HepG2 (cell line): ENCODE measurements at regions of chr14 and their contacts with region 1.

Region 1: GRCh38 chr14:35404449-35405303 is at the start of gene NFKBIA:
- DNase-seq: peak; percentile 93
- ATAC-seq: peak; percentile 78
- H3K4me3 ChIP-seq: peak within 1 kb of the TSS; percentile 88 to 99 (median 99)
- H3K27ac ChIP-seq: peak within 1 kb of the TSS; percentile 97
- H3K4me1 ChIP-seq: peaks cover 66% of the 10 kb centered on the region
- H3K27me3 ChIP-seq: no peaks in the 10 kb centered on the region; a peak in 2 of 5 replicates
- CTCF ChIP-seq: peak; percentile 75
- EP300 ChIP-seq: peak in 1 of 2 experiments; percentile 54; a peak in 3 of 4 replicates
- POLR2A ChIP-seq: peak in 1 of 2 experiments; percentile 97; a peak in 2 of 4 replicates
- RAD21 ChIP-seq: peak; percentile 96
- total RNA-seq, gene NFKBIA: 232 and 319 TPM in 2 replicates

Region 2: DNA sequence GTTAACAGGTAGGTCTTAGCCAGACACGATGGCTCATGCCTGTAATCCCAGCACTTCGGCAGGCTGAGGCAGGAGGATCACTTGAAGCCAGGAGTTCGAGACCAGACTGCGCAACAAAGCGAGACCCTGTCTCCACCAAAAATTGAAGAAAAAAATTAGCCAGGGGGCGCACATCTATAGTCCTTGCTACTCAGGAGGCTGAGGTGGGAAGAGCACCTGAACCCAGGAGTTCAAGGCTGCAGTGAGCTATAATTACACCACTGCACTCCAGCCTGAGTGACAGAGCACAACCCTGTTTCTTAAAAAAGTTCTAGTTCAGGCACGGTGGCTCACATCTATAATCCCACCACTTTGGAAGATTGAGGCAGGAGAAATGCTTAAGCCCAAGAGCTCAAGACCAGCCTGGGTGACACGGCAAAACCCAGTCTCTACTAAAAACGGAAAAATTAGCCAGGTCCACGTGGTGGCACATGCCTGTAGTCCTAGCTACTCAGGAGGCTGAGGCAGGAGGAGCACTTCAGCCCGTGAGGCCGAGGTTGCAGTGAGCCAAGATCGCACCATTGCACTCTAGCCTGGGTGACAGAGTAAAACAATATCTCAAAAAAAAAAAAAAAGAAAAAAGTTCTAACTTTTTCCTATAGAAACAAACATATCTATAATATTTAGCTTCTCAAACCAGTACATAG is 538.6 kb before region 1 on chr14:
- CTCF ChIA-PET with region 1: no interaction called
- POLR2A ChIA-PET with region 1: no interaction called
- in situ Hi-C with region 1: no loop called
- intact Hi-C with region 1: no loop called
- DNase-seq: peak; percentile 35
- ATAC-seq: peak; percentile 45
- H3K4me3 ChIP-seq: no peak overlapping the region
- H3K27ac ChIP-seq: no peak overlapping the region
- H3K4me1 ChIP-seq: peaks cover 26% of the 10 kb centered on the region
- H3K27me3 ChIP-seq: no peaks in the 10 kb centered on the region
- CTCF ChIP-seq: peak; percentile 40
- EP300 ChIP-seq: no peak
- POLR2A ChIP-seq: no peak
- RAD21 ChIP-seq: no peak

Region 3: DNA sequence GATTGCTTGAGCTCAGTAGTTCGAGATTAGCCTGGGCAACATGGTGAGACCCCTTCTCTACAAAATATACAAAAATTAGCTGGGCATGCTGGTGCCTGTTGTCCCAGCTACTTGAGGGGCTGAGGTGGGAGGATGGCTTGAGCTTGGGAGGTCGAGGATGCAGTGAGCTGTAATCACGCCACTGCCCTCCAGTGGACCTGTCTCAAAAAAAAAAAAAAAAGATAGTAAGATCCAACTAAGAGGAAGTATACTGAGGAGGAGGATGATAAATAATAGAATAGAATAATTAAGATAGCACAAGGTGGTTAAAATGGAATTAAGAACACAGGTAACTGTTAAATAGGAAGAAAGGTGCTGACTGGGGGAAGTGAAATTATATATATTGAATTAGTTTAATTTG is 492.5 kb before region 1 on chr14:
- CTCF ChIA-PET with region 1: no interaction called
- POLR2A ChIA-PET with region 1: no interaction called
- in situ Hi-C with region 1: no loop called
- intact Hi-C with region 1: no loop called
- DNase-seq: peak; percentile 34
- ATAC-seq: peak; percentile 71
- H3K4me3 ChIP-seq: no peak overlapping the region
- H3K27ac ChIP-seq: no peak overlapping the region
- H3K4me1 ChIP-seq: no peaks in the 10 kb centered on the region
- H3K27me3 ChIP-seq: no peaks in the 10 kb centered on the region
- CTCF ChIP-seq: peak; percentile 48
- EP300 ChIP-seq: no peak
- POLR2A ChIP-seq: no peak
- RAD21 ChIP-seq: 0 out of 2 replicates have a peak, but pooled peaks have one; percentile 7

Region 4: DNA sequence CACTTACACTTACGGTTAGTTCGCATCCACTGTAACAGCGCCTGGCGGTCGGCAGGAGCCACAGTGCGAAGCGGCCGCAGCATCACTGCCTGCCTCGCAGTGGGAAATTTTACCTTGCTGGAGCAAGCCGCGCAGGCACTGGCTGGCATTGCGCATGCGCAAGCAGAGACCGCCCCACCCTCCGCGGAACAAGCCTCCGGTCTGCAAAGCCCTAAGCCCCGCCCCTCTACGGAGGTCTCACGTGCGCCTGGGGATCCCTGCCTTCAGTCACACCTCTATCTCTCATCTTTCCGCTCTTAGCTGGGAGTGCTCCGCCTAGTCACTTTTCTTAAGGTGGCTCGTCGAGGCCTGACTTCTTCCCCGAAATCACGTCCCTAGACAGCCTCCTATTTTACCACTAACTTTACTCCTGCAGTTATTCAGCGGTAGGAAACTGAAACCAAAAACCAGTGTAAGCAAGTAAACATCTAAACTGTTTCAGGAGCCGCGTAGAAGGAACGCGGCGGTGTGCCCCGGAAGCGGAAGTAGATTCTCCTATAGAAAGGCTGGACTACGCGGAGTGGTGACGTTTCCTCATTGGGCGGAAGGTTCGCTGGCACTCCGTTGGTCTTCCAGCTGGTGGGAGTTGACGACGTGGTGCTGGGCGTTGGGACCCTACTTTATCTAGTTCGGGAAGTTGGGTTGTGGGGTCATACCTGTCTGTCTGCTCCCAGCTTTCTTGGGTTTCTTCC is 422.1 kb before region 1 on chr14 and contains the start of gene SRP54:
- CTCF ChIA-PET with region 1: no interaction called
- POLR2A ChIA-PET with region 1: interaction called, 30 read pairs
- in situ Hi-C with region 1: no loop called
- intact Hi-C with region 1: no loop called
- DNase-seq: peak; percentile 100
- ATAC-seq: peak; percentile 89
- H3K4me3 ChIP-seq: peak within 1 kb of the TSS; percentile 78 to 84 (median 80)
- H3K27ac ChIP-seq: peak within 1 kb of the TSS; percentile 93
- H3K4me1 ChIP-seq: peaks cover 59% of the 10 kb centered on the region
- H3K27me3 ChIP-seq: peaks cover 0 to 3% of the 10 kb centered on the region in 2 experiments; a peak in 1 of 5 replicates
- CTCF ChIP-seq: peak; percentile 67
- EP300 ChIP-seq: no peak; a peak in 2 of 4 replicates
- POLR2A ChIP-seq: peak; percentile 99
- RAD21 ChIP-seq: peak; percentile 59
- total RNA-seq, gene SRP54: 207 and 297 TPM in 2 replicates

Region 5: GRCh38 chr14:35146711-35147149 is 257.9 kb before region 1 on chr14:
- CTCF ChIA-PET with region 1: interaction called, 51 read pairs
- POLR2A ChIA-PET with region 1: interaction called, 98 read pairs
- in situ Hi-C with region 1: loop called (anchors 5 kb)
- intact Hi-C with region 1: no loop called
- DNase-seq: peak; percentile 72
- ATAC-seq: peak; percentile 84
- H3K4me3 ChIP-seq: no peak overlapping the region
- H3K27ac ChIP-seq: peak overlapping the region; percentile 3
- H3K4me1 ChIP-seq: peaks cover 33% of the 10 kb centered on the region
- H3K27me3 ChIP-seq: no peaks in the 10 kb centered on the region
- CTCF ChIP-seq: no peak
- EP300 ChIP-seq: no peak
- POLR2A ChIP-seq: no peak
- RAD21 ChIP-seq: no peak

Region 6: GRCh38 chr14:35285168-35286002 is 119.3 kb before region 1 on chr14:
- CTCF ChIA-PET with region 1: no interaction called
- POLR2A ChIA-PET with region 1: interaction called, 287 read pairs
- in situ Hi-C with region 1: loop called (anchors 5 kb)
- intact Hi-C with region 1: no loop called
- DNase-seq: no peak
- ATAC-seq: no peak
- H3K4me3 ChIP-seq: no peak overlapping the region
- H3K27ac ChIP-seq: no peak overlapping the region
- H3K4me1 ChIP-seq: peaks cover 14% of the 10 kb centered on the region
- H3K27me3 ChIP-seq: no peaks in the 10 kb centered on the region
- CTCF ChIP-seq: no peak
- EP300 ChIP-seq: no peak
- POLR2A ChIP-seq: no peak
- RAD21 ChIP-seq: no peak

Region 7: GRCh38 chr14:35331605-35332516 is 72.8 kb before region 1 on chr14:
- CTCF ChIA-PET with region 1: interaction called, 10 read pairs
- POLR2A ChIA-PET with region 1: interaction called, 473 read pairs
- in situ Hi-C with region 1: loop called (anchors 5 kb)
- intact Hi-C with region 1: loop called (anchors 1 kb)
- DNase-seq: peak; percentile 75
- ATAC-seq: peak; percentile 31
- H3K4me3 ChIP-seq: peak overlapping the region; percentile 32 to 62 (median 41)
- H3K27ac ChIP-seq: no peak overlapping the region
- H3K4me1 ChIP-seq: peaks cover 67% of the 10 kb centered on the region
- H3K27me3 ChIP-seq: no peaks in the 10 kb centered on the region
- CTCF ChIP-seq: peak; percentile 11; the same call in 1 of the 2 replicates
- EP300 ChIP-seq: no peak
- POLR2A ChIP-seq: no peak
- RAD21 ChIP-seq: peak; percentile 39; the same call in 1 of the 2 replicates

Region 8: DNA sequence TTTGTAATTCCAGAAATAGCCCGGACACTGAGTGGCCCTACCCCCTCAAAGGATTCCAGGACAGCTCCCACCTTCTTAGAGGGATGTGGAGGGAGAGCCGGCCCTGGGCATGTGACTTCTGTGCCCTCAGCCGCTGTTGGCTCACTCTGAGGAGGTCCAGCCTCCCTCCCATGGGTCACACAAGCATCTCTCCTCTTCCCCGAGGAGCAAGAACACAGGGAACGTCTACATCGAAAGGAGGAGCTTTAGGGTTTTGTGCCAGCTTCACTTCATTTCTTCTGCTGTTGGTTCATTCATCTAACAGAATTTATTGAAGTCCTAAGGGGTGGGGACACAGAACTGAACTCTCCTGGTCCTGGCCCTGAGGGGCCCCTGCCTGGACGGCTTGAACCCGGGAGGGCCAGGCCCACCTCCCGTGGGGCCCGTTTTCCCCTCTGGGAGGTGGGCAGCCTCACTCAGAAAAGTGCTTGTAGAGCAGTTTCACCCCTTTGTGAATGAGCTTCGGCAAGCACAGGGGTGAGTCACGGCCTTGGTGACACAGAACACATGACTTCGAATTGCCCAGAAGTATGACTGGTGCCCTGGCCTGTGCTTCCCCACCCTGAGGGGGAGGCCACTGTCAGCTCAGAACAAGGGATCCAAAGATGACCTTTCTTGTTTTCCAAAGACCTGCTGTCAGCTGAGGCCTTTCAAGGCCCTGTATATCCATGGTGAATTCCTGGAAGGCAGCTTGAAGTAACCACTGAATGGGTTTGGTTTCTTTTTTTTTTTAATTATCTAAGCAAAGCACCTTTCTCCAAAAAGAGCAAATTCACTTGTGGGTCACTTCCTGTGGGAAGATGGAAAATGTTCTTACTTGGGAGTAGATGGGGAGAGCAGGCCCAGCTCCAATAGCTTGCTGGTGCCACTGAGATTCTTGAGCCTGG is 39.3 kb before region 1 on chr14:
- CTCF ChIA-PET with region 1: no interaction called
- POLR2A ChIA-PET with region 1: interaction called, 82 read pairs
- in situ Hi-C with region 1: no loop called
- intact Hi-C with region 1: loop called (anchors 5 kb)
- DNase-seq: peak; percentile 98
- ATAC-seq: peak; percentile 87
- H3K4me3 ChIP-seq: peak overlapping the region in 2 of 3 experiments; percentile 1 to 38; a peak in 2 of 6 replicates
- H3K27ac ChIP-seq: no peak overlapping the region
- H3K4me1 ChIP-seq: peaks cover 61% of the 10 kb centered on the region
- H3K27me3 ChIP-seq: 0 out of 5 replicates have a peak, but pooled peaks cover 0 to 6% of the 10 kb centered on the region in 2 experiments
- CTCF ChIP-seq: no peak; the same call in 1 of the 2 replicates
- EP300 ChIP-seq: peak; percentile 73 to 75; a peak in 3 of 4 replicates
- POLR2A ChIP-seq: 0 out of 4 replicates have a peak, but pooled peaks of 1 of the 2 experiments have one; percentile 28
- RAD21 ChIP-seq: peak; percentile 35; the same call in 1 of the 2 replicates

Region 9: DNA sequence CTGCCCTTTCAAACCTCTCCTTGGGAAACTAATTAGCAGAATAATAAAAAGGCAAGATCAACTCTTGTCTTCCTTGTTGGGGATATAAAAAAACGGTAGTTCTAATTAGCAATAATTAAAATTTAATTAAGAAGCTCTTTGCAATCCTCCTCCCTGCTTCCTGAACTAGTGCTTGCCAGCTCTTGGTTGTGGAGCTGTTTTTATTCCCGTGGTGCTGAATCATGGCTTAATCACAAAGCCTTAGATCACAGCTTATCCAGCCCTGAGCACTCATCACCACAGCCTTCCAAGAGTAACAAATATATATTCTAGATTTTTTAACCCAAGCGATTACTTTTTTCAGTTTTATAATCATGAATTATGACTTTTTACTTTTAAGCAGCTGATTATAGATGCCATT is 66.1 kb after region 1 on chr14:
- CTCF ChIA-PET with region 1: no interaction called
- POLR2A ChIA-PET with region 1: no interaction called
- in situ Hi-C with region 1: no loop called
- intact Hi-C with region 1: no loop called
- DNase-seq: no peak
- ATAC-seq: no peak
- H3K4me3 ChIP-seq: no peak overlapping the region
- H3K27ac ChIP-seq: no peak overlapping the region
- H3K4me1 ChIP-seq: no peaks in the 10 kb centered on the region
- H3K27me3 ChIP-seq: no peaks in the 10 kb centered on the region
- CTCF ChIP-seq: no peak
- EP300 ChIP-seq: no peak
- POLR2A ChIP-seq: no peak
- RAD21 ChIP-seq: no peak

Region 10: GRCh38 chr14:35826218-35826951 is 421.7 kb after region 1 on chr14 and contains the start of gene BRMS1L:
- CTCF ChIA-PET with region 1: no interaction called
- POLR2A ChIA-PET with region 1: interaction called, 13 read pairs
- in situ Hi-C with region 1: no loop called
- intact Hi-C with region 1: no loop called
- DNase-seq: peak; percentile 100
- ATAC-seq: peak; percentile 96
- H3K4me3 ChIP-seq: peak within 1 kb of the TSS; percentile 78 to 99 (median 95)
- H3K27ac ChIP-seq: peak within 1 kb of the TSS; percentile 95
- H3K4me1 ChIP-seq: peaks cover 45% of the 10 kb centered on the region
- H3K27me3 ChIP-seq: no peaks in the 10 kb centered on the region; a peak in 1 of 5 replicates
- CTCF ChIP-seq: peak; percentile 51
- EP300 ChIP-seq: peak in 1 of 2 experiments; percentile 50; a peak in 2 of 4 replicates
- POLR2A ChIP-seq: peak in 1 of 2 experiments; percentile 100; a peak in 2 of 4 replicates
- RAD21 ChIP-seq: peak; percentile 72; the same call in 1 of the 2 replicates
- total RNA-seq, gene BRMS1L: 23.8 and 35.5 TPM in 2 replicates